Naive thymus-derived CD4-positive, alpha-beta T cell (primary cell): ENCODE measurements at regions of chr12 and their contacts with region 1.

Region 1: GRCh38 chr12:53625946-53626701 is at the start of gene ATF7:
- DNase-seq: peak; percentile 95 to 100 (median 99)
- ATAC-seq: peak; percentile 97
- H3K4me3 ChIP-seq: peak within 1 kb of the TSS; percentile 92
- H3K4me3 Mint-ChIP-seq: peak within 1 kb of the TSS; percentile 97 to 100 (median 98)
- H3K27ac ChIP-seq: peak within 1 kb of the TSS; percentile 83
- H3K27ac Mint-ChIP-seq: peak within 1 kb of the TSS; percentile 95 to 99 (median 97)
- H3K4me1 ChIP-seq: peaks cover 20 to 32% of the 10 kb centered on the region in 2 donors
- H3K4me1 Mint-ChIP-seq: peaks cover 30 to 55% (median 49%) of the 10 kb centered on the region in 7 donors
- H3K27me3 ChIP-seq: no peaks in the 10 kb centered on the region
- H3K27me3 Mint-ChIP-seq: peaks cover 0 to 6% (median 0%) of the 10 kb centered on the region in 5 donors
- total RNA-seq, gene ATF7: 21.9 to 39.5 (median 30.9) TPM

Region 2: DNA sequence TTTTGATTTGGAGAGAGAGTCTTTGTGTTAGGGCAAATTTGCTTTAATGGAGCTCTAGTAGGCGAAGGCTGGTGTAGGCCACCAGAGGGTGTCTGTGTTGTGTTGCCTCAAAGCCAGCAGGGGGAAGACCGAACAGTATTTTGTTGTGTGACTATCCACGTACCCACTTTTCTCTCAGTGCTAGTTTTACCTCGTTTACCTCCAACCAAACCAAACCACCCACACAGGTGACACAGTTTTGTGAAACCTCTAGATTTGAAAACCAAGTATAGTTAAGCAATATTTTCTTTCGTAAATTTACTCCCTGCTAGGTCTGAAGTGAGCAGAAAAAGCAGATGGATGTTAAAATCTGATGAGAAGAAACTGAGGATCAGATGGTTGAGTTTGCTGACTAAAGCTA is 82.6 kb before region 1 on chr12:
- CTCF ChIA-PET with region 1: interaction called, 3 read pairs
- POLR2A ChIA-PET with region 1: no interaction called
- intact Hi-C with region 1: loop called (anchors 1 kb)
- DNase-seq: peak in 8 of 9 donors; percentile 37 to 78 (median 64)
- ATAC-seq: peak; percentile 94
- H3K4me3 ChIP-seq: no peak overlapping the region
- H3K4me3 Mint-ChIP-seq: peak overlapping the region in 5 of 10 donors; percentile 5 to 52 (median 33)
- H3K27ac ChIP-seq: peak overlapping the region; percentile 26
- H3K27ac Mint-ChIP-seq: peak overlapping the region; percentile 51 to 88 (median 76)
- H3K4me1 ChIP-seq: peaks cover 0 to 7% of the 10 kb centered on the region in 2 donors
- H3K4me1 Mint-ChIP-seq: peaks cover 0 to 25% (median 18%) of the 10 kb centered on the region in 7 donors
- H3K27me3 ChIP-seq: no peaks in the 10 kb centered on the region
- H3K27me3 Mint-ChIP-seq: no peaks in the 10 kb centered on the region